Right ventricle myocardium inferior (tissue), 1 donor: ENCODE measurements at regions of chr17 and their contacts with region 1.

Region 1: DNA sequence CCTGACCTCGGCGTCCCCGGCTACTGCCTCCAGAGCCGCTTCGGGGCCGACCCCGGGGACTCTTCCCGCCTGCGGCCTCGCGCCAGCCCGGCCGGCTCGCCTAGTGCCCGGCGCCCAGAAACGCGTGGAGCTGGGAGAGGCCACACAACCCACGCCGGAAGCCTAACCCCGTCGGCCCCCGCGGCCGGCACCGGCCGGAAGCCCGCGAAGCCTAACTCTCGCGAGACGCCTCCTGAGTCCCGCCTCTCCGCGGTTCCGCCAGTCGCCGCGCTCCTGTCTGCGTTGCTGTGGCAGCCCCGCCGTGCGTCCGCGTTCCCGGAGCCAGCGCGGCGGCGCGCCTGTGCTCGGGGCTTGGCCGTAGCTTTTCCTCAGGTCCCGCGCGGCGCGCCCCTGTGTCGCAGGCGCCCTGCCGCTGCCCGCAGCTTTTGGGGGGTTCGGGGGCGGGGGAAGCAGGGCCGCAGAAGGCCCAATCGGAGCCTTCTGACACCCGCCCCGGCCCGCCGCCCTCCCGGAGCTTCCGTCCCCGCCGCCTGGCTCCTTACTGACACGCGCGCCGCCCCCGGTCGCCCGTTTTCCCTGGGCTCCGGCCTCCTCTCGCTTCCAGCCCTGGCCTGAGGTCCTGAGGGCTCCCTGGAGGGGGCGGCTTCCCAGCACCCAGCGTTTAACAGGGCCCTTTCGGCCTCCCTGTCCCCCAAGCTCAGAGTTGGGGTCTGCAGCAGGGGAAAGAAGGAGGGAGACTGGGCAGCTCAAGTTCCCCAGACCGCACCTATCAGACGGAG is 21.7 kb downstream of the NPTX1 start:
- DNase-seq: peak; percentile 98
- ATAC-seq: peak; percentile 97

Region 2: DNA sequence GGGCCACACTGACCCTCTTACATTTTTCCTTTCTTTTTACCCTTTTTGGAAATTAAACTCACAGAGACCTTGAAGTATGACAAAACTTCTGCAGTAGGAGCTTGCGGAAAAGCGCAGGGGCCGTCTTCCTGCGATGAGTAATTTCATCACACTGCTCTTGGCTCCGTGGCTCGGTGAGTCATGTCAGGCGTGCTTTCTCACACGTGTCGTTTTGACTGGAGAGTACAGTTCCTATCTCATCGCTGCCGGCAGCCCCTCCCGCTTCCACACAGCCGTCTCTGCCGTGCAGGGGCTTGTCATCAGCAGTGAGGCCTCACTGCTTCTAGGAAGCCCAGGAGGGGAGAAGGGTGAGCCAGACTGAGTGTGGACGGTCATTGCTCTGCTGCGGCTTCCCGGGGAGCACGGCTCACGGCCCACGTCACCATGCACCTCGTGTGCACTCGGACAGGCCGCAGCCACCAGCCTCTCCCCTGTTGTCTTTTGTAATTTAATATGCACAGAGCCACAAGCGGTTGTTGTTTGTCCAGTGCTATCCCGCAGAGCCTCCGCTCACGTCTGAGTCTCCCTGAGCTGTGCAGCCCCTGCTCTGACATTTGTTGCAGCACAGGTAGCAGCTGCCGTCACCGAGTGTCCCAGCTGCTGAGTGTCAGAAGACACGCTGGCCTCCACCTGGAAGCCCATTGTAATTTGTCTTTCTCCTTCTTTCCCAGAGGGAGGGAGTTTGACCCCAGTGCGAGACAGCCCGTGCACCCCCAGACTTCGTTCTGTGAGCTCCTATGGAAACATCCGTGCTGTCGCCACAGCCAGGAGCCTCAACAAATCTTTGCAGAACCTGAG is 437.5 kb after region 1 on chr17:
- intact Hi-C with region 1: loop called (anchors 10 kb)
- DNase-seq: peak; percentile 85
- ATAC-seq: peak; percentile 89